GM12878 (cell line): ENCODE measurements at regions of chr12 and their contacts with region 1.

Region 1: GRCh38 chr12:108320507-108321293 is 18.4 kb downstream of the CMKLR1 start:
- DNase-seq: peak; percentile 85
- ATAC-seq: peak; percentile 90
- H3K4me3 ChIP-seq: peak overlapping the region; percentile 69
- H3K27ac ChIP-seq: peak overlapping the region; percentile 89
- H3K4me1 ChIP-seq: peaks cover 50% of the 10 kb centered on the region
- H3K27me3 ChIP-seq: no peaks in the 10 kb centered on the region
- CTCF ChIP-seq: no peak
- EP300 ChIP-seq: no peak
- POLR2A ChIP-seq: 0 out of 2 replicates have a peak, but pooled peaks have one; percentile 26
- RAD21 ChIP-seq: no peak

Region 2: DNA sequence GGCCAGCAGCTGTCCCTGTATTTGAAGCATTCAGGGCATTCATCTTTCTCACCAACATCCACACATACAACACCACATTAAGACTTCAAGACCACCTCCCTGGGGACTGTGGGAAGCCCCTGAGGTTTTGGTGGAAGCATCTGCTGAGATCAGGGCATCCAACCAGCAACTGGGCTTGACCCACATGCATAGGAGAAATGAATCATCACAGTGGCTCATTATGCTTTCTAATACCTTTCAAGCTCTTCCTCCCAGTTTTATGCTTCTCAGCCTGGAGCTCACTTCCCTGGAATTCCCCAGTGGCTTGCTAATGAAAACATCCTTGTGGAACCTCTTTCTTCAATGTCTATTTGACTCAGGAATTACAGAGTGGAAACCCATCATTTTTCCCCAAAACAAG is 39.8 kb after region 1 on chr12:
- CTCF ChIA-PET with region 1: interaction called, 3 read pairs
- POLR2A ChIA-PET with region 1: interaction called, 4 read pairs
- RAD21 ChIA-PET with region 1: interaction called, 8 read pairs
- SMC1A ChIA-PET with region 1: interaction called, 5 read pairs
- in situ Hi-C with region 1: no loop called
- intact Hi-C with region 1: loop called (anchors 5 kb)
- DNase-seq: peak; percentile 84
- ATAC-seq: peak; percentile 86
- H3K4me3 ChIP-seq: no peak overlapping the region; the same call in 1 of the 2 replicates
- H3K27ac ChIP-seq: peak overlapping the region; percentile 57
- H3K4me1 ChIP-seq: peaks cover 30% of the 10 kb centered on the region
- H3K27me3 ChIP-seq: no peaks in the 10 kb centered on the region
- CTCF ChIP-seq: no peak
- EP300 ChIP-seq: peak; percentile 54 to 73; a peak in 3 of 4 replicates
- POLR2A ChIP-seq: no peak
- RAD21 ChIP-seq: 0 out of 2 replicates have a peak, but pooled peaks have one; percentile 21